CD8-positive, alpha-beta T cell (primary cell): ENCODE measurements at regions of chr20 and their contacts with region 1.

Region 1: DNA sequence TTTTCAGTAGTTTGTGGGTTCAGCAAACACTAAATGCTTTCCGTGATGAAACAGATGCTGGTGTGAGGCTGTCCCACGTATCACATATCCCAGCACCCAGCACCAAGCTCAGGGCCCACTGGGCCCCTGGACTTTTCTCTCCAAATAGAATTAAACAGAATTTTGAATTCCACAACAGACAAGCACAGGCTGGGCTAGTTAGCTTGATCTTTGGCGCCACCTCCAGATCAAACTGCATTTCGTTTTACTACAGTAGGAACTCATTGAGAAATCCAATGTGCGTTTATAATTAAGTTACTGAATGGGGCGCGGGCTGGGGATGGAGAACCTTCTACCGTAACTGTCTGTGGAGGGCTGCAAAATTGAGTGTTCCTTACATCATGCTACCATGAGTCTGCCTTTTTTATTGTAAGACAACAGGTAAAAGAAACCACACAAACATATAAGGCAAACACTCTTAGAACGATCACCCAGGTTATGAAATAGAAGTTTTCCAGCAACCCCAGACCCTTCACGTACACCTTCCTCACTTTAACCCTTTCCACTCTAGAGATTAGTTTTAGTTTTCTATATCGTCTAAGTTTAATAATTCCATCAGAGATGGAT is 107.8 kb downstream of the ZFP64 start:
- DNase-seq: peak in 7 of 9 experiments; percentile 10 to 68 (median 42)
- ATAC-seq: no peak
- H3K4me3 ChIP-seq: no peak overlapping the region
- H3K4me3 Mint-ChIP-seq: no peak overlapping the region
- H3K27ac ChIP-seq: no peak overlapping the region
- H3K27ac Mint-ChIP-seq: no peak overlapping the region
- H3K4me1 ChIP-seq: no peaks in the 10 kb centered on the region
- H3K4me1 Mint-ChIP-seq: peaks cover 13% of the 10 kb centered on the region
- H3K27me3 ChIP-seq: no peaks in the 10 kb centered on the region
- H3K27me3 Mint-ChIP-seq: no peaks in the 10 kb centered on the region
- CTCF ChIP-seq: peak; percentile 28

Region 2: DNA sequence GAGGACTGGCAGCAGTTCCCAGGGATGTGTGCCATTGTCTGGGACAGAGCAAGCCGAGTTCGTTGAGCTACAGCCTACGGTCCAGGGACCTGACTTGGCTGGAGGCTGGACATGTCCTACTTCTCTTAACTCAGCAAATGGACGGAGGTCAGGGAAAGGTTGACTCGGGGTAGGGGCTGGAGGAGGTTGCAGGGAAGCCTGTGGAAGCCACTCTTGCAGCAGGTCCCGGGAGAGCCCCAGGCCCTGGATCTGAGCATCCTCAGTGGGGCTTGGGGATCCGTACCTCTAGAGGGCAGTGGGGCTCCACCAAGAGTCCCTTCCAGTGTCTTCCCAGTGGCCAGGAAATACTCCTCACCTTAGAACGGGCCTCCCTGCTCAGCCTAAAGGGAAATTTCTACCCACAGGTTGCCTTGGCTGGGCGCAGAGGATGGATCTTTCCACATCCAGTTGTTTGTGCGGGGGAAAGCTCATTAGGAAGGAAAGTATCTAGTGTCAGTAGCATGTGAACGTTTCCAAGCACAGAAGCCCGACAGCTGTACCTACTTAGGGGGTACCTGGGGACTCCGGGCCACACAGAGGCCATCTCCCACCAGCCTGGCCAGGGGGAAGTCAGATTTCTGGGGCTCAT is 711.4 kb before region 1 on chr20:
- CTCF ChIA-PET with region 1: interaction called, 4 read pairs
- POLR2A ChIA-PET with region 1: no interaction called
- intact Hi-C with region 1: loop called in 1 of 2 experiments (anchors 5 kb)
- DNase-seq: peak; percentile 22 to 77 (median 58)
- ATAC-seq: peak; percentile 62
- H3K4me3 ChIP-seq: no peak overlapping the region
- H3K4me3 Mint-ChIP-seq: no peak overlapping the region
- H3K27ac ChIP-seq: no peak overlapping the region
- H3K27ac Mint-ChIP-seq: no peak overlapping the region
- H3K4me1 ChIP-seq: no peaks in the 10 kb centered on the region
- H3K4me1 Mint-ChIP-seq: peaks cover 5% of the 10 kb centered on the region
- H3K27me3 ChIP-seq: no peaks in the 10 kb centered on the region
- H3K27me3 Mint-ChIP-seq: no peaks in the 10 kb centered on the region
- CTCF ChIP-seq: peak; percentile 60

Region 3: DNA sequence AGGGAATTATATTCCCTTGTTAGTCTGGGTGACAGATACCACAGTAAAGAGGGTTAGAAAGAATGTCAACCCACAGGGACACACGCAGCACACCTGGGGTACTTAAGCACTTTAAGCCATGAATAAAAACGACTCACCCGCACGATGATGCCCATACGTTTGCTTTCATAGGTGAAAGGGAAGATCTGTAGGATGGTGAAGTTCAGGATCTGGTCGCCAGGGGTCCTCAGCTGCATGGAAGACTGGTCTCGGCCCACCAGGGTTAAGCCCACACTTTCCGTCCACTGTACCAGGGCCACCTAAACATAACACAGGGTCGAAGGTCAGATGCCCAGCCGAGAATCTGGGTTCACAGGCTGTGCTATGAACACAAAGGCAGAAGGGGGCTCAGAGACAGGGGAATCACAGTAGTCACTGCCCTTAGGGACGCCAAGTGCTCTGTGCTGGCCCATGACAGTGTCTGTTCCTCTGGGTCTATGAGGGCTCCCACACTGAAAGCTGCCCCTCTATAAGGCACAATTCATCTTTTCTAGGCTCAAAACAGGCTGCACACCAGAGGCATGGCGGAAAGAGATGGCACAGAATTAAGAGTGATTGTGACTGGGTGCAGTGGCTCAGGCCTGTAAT is 444.4 kb before region 1 on chr20:
- CTCF ChIA-PET with region 1: interaction called, 4 read pairs
- POLR2A ChIA-PET with region 1: no interaction called
- intact Hi-C with region 1: loop called in 1 of 2 experiments (anchors 1 kb)
- DNase-seq: peak; percentile 15 to 75 (median 50)
- ATAC-seq: peak; percentile 44
- H3K4me3 ChIP-seq: no peak overlapping the region
- H3K4me3 Mint-ChIP-seq: no peak overlapping the region
- H3K27ac ChIP-seq: no peak overlapping the region
- H3K27ac Mint-ChIP-seq: no peak overlapping the region
- H3K4me1 ChIP-seq: no peaks in the 10 kb centered on the region
- H3K4me1 Mint-ChIP-seq: no peaks in the 10 kb centered on the region
- H3K27me3 ChIP-seq: no peaks in the 10 kb centered on the region
- H3K27me3 Mint-ChIP-seq: peaks cover 3% of the 10 kb centered on the region
- CTCF ChIP-seq: peak; percentile 59

Region 4: DNA sequence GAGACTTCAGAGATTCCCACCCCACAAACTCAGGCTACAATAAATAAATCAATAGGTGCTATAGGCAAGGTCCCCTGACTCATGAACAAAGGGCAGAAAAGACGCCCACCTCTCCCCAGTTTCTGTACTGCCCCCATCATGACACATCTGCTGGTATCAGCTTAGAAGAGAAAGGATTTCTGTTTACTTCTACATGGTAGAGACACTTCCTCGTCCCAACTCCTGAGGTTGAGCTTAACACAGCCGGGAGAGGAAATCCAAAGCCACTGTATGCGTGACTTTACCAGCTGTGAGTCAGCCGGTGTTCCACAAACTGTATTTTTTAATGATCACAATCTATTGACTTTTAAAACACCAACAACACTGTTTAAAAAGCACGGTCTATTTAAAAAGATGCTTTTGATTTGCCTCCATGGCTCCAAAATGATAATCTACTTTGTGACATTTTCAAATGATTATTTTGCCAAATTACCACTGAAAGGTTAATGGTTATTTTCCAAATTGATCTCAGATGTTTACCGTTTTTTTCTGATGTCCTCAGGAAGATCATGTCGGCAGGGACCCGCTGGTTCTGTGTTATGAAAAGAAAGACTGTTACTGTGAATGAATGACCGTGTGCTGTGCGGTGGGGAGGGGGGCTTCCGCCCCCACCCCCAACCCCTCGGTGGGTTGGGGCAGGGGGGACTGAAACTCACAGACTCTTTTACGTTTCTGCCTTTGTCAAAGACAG is 388.0 kb before region 1 on chr20:
- CTCF ChIA-PET with region 1: interaction called, 8 read pairs
- POLR2A ChIA-PET with region 1: no interaction called
- intact Hi-C with region 1: loop called (anchors 2 kb)
- DNase-seq: no peak
- ATAC-seq: no peak
- H3K4me3 ChIP-seq: no peak overlapping the region
- H3K4me3 Mint-ChIP-seq: no peak overlapping the region
- H3K27ac ChIP-seq: no peak overlapping the region
- H3K27ac Mint-ChIP-seq: no peak overlapping the region
- H3K4me1 ChIP-seq: no peaks in the 10 kb centered on the region
- H3K4me1 Mint-ChIP-seq: peaks cover 20% of the 10 kb centered on the region
- H3K27me3 ChIP-seq: peaks cover 0 to 2% of the 10 kb centered on the region in 2 experiments
- H3K27me3 Mint-ChIP-seq: peaks cover 11% of the 10 kb centered on the region
- CTCF ChIP-seq: no peak

Region 5: GRCh38 chr20:51800060-51800794 is 283.5 kb before region 1 on chr20:
- CTCF ChIA-PET with region 1: interaction called, 5 read pairs
- POLR2A ChIA-PET with region 1: no interaction called
- intact Hi-C with region 1: loop called in 1 of 2 experiments (anchors 2 kb)
- DNase-seq: peak; percentile 11 to 68 (median 53)
- ATAC-seq: peak; percentile 46
- H3K4me3 ChIP-seq: peak overlapping the region in 1 of 2 experiments; percentile 40
- H3K4me3 Mint-ChIP-seq: peak overlapping the region; percentile 50
- H3K27ac ChIP-seq: no peak overlapping the region
- H3K27ac Mint-ChIP-seq: no peak overlapping the region
- H3K4me1 ChIP-seq: peaks cover 10% of the 10 kb centered on the region
- H3K4me1 Mint-ChIP-seq: peaks cover 10% of the 10 kb centered on the region
- H3K27me3 ChIP-seq: peaks cover 3 to 16% of the 10 kb centered on the region in 2 experiments
- H3K27me3 Mint-ChIP-seq: peaks cover 54% of the 10 kb centered on the region
- CTCF ChIP-seq: peak; percentile 39

Region 6: GRCh38 chr20:51930775-51931174 is 153.0 kb before region 1 on chr20:
- CTCF ChIA-PET with region 1: no interaction called
- POLR2A ChIA-PET with region 1: no interaction called
- intact Hi-C with region 1: no loop called
- DNase-seq: no peak
- ATAC-seq: no peak
- H3K4me3 ChIP-seq: no peak overlapping the region
- H3K4me3 Mint-ChIP-seq: no peak overlapping the region
- H3K27ac ChIP-seq: no peak overlapping the region
- H3K27ac Mint-ChIP-seq: no peak overlapping the region
- H3K4me1 ChIP-seq: no peaks in the 10 kb centered on the region
- H3K4me1 Mint-ChIP-seq: no peaks in the 10 kb centered on the region
- H3K27me3 ChIP-seq: no peaks in the 10 kb centered on the region
- H3K27me3 Mint-ChIP-seq: peaks cover 7% of the 10 kb centered on the region
- CTCF ChIP-seq: no peak